AG04449 (cell line): ENCODE measurements at regions of chr4 and their contacts with region 1.

Region 1: DNA sequence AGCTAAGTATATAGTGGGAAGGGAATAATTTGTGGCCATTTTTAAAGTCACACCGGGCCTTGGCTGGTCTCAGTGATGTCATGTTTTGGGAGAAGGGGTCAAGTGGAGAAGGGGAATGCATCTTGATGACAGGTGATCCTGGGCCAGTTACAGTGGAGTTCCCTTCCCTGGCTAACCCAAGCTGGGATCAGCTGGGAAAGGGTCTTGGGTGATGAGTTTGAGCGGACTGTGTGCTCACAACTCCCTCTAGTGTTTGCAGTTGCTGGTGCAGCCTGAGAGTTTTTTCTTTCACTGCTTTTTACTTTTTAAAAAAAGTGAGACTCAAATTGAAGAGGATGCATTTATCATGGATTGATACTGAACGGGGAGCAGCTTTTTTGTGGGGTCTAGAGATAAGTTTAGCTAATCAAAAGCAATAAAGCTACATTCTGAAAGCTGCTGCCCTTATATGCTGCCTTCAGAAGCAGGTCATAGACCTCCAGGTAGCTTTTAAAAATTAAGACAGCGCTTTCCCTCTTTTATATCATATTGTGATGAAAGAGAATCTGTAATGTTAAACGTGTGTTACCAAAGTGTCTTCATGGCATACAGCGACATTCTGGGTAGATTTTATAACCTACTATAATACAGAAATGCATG is 164.7 kb downstream of the DCLK2 start:
- DNase-seq: no peak
- H3K4me3 ChIP-seq: no peak overlapping the region
- CTCF ChIP-seq: peak; percentile 78

Region 2: GRCh38 chr4:149980941-149981340 is 262.0 kb before region 1 on chr4:
- CTCF ChIA-PET with region 1: interaction called, 30 read pairs
- POLR2A ChIA-PET with region 1: no interaction called
- DNase-seq: no peak
- H3K4me3 ChIP-seq: no peak overlapping the region
- CTCF ChIP-seq: peak; percentile 80

Region 3: DNA sequence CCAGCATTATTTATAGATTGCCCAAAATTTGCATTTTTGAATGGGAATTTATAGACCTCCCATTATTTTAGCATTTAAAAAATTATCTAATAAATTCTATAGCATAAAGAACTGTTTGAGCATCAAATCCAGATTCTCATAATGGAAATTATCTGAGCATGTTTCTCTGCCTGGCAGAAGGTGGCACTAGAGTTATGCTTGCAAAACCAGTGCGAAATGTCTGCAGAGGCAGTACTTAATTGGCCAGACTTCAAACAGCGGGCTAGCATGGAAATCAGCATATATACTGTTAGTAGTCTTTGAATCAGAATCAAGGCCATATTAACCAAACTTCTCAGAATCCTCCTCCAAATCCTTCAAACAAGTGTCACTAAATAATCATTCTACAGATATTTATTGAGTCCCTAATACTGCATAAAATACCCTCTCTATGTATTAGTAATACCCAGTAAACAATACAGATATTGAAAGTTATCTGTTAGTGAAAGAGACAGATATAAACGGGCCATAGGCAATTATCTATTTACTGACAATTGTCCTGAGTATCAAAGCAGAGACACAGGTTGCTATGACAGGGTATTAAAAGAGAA is 243.4 kb before region 1 on chr4:
- CTCF ChIA-PET with region 1: interaction called, 136 read pairs
- POLR2A ChIA-PET with region 1: no interaction called
- DNase-seq: peak; percentile 70
- H3K4me3 ChIP-seq: no peak overlapping the region
- CTCF ChIP-seq: peak; percentile 81

Region 4: DNA sequence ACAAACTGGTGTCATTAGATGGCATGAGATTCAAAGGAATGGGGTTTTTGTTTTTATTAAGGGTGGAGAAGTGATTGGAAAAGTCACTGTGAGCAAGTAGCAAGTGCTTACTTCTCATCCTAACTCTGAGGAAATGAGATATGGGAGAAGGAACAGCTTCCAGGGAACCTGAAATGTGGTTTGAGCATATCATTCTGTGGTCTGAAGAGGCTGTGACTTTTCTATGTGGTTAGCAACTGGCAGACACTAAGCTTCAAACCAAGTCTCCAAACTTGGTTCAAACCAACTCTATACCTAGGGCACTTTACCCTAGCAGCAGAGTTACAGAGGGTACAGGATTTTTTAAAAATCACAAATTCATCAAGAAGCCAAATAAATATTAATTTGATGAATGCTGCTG is 106.5 kb before region 1 on chr4:
- CTCF ChIA-PET with region 1: interaction called, 13 read pairs
- POLR2A ChIA-PET with region 1: no interaction called
- DNase-seq: no peak
- H3K4me3 ChIP-seq: no peak overlapping the region
- CTCF ChIP-seq: no peak

Region 5: GRCh38 chr4:150232029-150232428 is 10.9 kb before region 1 on chr4:
- CTCF ChIA-PET with region 1: interaction called, 28 read pairs
- POLR2A ChIA-PET with region 1: no interaction called
- DNase-seq: no peak
- H3K4me3 ChIP-seq: no peak overlapping the region
- CTCF ChIP-seq: no peak

Region 6: DNA sequence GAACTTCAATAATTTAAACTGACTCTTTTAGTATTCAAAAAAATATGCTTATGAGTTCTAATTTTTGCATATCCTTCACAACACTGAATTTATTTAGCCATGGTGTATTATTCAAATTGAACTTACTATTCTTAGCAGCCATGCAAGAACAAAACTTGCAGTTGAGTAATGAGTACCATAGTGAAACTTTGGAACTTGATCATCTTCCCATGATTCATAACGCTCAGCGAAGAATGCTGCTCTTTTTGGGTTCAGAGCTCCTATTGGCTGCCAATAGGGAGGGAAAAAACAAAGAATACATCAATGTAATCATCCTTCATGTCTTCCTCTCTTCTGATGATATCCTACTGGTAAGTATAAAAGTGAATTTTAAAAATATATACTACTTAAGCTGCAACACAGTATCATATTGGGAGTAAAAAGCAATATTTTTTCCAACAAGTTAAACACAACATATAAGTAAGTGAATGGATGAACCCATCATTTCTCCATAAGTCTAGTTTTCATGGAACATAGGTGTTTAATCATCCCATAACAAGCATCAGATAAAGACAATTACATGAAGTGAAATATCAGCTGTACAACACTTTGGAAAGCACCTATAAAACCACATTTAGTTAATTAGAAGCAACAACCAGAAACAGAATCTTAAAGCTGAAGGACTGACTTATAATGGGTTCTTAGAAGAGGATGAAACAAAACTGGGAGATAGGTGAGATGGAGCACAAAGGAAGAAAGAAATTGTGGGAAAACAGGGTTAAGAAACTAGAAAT is 193.8 kb after region 1 on chr4:
- CTCF ChIA-PET with region 1: no interaction called
- POLR2A ChIA-PET with region 1: no interaction called
- DNase-seq: no peak
- H3K4me3 ChIP-seq: no peak overlapping the region
- CTCF ChIP-seq: no peak

Region 7: DNA sequence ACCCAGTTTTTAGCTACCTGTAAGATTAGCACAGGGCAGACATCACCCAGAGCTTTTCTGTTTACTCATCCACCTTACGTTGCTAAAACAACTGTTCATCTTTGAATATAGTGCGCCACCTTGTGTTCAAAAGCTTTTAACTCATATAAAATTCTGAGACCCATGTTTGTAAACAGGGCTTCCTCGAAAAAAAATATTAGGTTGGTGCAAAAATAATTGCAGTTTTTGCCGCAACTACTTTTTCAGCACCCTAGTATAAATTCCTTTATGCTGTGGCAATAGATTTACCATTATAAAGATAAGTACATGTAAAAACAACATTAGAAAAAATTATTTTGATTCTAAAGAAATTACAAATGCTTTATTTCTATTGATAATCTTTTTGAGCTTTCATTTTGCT is 624.2 kb after region 1 on chr4:
- CTCF ChIA-PET with region 1: interaction called, 14 read pairs
- POLR2A ChIA-PET with region 1: no interaction called
- DNase-seq: peak; percentile 14
- H3K4me3 ChIP-seq: no peak overlapping the region
- CTCF ChIP-seq: peak; percentile 20